ENCODE measurements at regions of chr2 and their contacts with region 1.

Region 1: GRCh38 chr2:162058973-162059668 is 14.9 kb downstream of the DPP4 start:
- DNase-seq: peak; percentile 33
- H3K4me3 Mint-ChIP-seq: peak overlapping the region; percentile 54
- H3K27ac Mint-ChIP-seq: peak overlapping the region; percentile 93
- H3K4me1 Mint-ChIP-seq: peaks cover 82% of the 10 kb centered on the region
- H3K27me3 Mint-ChIP-seq: no peaks in the 10 kb centered on the region

Region 2: DNA sequence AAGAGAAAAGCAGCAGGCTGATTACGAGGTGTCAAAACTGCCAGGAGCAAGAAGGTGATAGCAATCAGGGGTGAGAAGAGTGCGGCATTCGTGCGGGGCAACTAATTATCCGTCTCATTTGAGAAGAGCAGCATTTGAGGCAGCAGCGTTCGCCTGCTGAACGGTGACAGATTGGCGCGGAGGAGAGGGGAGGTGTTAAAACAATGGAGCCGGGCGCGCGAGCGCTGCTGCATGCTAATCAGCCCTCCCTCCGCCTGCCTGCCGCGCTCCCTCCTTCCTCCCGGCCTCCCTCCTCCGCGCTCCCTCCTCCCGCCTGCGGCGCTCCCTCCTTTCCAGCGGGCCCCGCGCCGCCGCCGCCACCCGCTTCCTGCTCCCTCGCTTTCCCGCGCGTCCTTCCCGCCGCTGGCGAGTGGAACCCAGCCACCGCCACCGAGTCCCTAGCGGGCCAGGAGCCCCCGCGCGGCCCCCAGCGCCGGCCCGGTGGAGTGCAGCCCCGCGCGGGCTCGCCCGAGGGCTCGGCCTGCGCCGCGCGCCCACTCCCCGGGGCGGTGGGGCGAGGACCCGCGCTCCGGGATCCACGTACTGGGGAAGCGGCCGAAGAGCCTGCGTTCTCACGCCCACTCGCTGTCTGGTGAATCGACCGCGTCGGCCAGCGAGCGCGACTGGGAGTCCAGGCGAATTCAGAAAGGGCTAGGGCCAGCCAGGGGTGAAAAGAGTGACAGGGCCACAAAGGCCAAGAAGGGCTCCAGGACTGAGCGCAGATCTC is 820.4 kb before region 1 on chr2:
- CTCF ChIA-PET with region 1: no interaction called
- POLR2A ChIA-PET with region 1: no interaction called
- intact Hi-C with region 1: loop called (anchors 10 kb)
- DNase-seq: peak; percentile 71
- H3K4me3 Mint-ChIP-seq: peak overlapping the region; percentile 83
- H3K27ac Mint-ChIP-seq: peak overlapping the region; percentile 65
- H3K4me1 Mint-ChIP-seq: peaks cover 52% of the 10 kb centered on the region
- H3K27me3 Mint-ChIP-seq: no peaks in the 10 kb centered on the region

Region 3: DNA sequence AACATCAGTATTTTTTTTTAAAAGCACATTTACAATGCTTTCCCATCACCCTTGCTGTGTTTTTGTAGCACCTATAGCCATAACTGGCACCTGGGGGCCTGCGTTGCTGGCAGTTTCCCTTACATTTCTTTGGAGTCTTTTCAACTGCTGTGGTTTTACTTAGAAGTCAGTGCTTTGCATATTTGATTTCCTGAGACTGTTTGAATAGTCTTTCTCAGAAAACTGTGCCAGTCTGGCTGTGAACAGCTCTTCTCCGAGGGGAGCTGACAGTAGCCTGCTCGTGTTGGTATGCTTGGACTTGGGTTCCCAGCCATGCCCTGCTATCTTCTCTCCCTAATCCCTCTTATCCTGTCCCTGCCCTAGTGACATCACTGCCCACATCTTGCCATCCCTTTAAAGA is 66.6 kb before region 1 on chr2:
- CTCF ChIA-PET with region 1: no interaction called
- POLR2A ChIA-PET with region 1: no interaction called
- intact Hi-C with region 1: loop called (anchors 1 kb)
- DNase-seq: peak; percentile 77
- H3K4me3 Mint-ChIP-seq: peak overlapping the region; percentile 73
- H3K27ac Mint-ChIP-seq: peak overlapping the region; percentile 92
- H3K4me1 Mint-ChIP-seq: peaks cover 61% of the 10 kb centered on the region
- H3K27me3 Mint-ChIP-seq: no peaks in the 10 kb centered on the region

Region 4: DNA sequence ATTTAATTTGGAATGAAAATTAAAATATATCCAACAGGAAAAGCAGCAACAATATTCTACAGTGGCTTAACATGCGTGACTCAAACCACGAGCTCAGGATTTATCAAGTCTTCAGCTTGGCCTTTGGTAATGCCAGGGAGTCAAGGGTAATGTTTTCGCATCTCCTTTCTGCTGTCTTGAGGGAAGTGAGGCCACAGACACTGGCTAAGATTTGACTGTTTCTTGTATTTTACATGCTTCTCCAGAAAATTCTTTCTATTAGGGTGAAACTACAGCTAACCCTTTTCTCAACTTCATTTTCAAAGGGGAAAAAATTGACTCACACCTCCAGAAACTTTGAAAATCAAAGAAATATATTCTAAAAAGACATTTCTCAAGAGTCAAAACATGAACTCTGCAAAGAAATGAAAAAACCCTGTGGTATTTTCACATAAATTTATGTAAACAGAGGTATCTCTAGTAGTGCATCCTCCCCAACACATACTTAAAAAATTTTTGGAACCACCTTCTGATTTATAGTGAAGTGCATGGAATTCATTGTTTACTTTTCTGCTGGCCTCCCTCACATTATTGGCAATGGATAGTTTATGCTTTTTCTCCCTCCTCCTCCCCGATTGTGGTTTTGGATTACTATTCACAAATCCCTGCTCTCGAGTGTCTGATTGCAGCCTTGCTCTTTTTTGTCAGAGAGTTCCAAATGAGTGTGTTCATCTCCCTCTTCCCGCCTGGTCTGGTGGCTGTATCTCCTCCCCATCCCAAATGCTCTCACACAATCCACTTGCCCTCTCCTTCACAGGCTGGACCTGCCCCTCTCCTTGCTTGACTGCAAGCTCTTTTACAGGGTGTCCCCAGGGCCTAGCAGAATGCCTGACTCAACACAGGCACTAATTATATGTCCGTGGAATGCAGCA is 33.7 kb before region 1 on chr2:
- CTCF ChIA-PET with region 1: no interaction called
- POLR2A ChIA-PET with region 1: no interaction called
- intact Hi-C with region 1: loop called (anchors 1 kb)
- DNase-seq: no peak
- H3K4me3 Mint-ChIP-seq: no peak overlapping the region
- H3K27ac Mint-ChIP-seq: no peak overlapping the region
- H3K4me1 Mint-ChIP-seq: peaks cover 38% of the 10 kb centered on the region
- H3K27me3 Mint-ChIP-seq: no peaks in the 10 kb centered on the region

Region 5: DNA sequence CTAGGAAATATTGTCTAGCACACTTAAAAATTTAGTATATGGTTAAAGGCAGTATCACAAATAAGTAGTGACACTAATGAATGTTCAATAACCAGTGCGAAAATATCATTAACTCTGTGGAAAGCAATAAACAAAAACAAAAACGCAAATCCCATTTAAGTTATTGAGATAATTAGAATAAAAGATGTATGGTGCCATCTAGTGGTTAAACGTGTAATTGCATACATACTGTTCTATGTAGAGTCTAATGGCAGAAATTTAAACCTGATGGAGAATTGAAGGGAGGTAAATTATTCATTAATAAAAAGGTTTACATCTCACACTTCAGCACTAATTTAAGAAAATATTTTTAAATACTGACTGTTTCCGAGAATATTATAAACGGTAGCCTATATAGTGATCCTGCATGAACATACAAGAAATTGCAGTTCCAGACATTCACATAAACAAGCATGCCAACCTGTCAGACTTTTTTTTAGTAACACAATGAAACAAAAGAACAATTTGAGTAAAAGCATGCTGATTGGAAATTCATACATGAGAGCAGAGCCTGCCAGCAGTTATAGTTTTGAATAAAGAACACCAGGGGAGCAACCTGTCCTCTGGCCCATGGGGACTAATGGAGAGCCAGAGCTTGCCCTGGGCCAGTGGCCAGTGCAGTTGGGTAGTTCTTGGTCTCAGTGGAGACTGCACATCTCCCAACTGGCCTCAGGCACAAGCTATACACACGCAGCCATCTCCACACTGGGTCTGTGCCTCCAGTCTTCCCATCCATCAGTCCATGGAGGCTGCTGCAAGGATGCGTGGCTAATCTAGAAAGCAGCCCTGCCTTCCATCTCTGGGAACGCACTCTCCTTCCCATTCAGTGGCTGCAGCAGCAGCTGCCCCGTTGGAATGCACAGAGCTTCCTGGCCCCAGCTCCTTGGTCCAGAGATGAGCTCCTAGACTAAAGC is 65.0 kb after region 1 on chr2:
- CTCF ChIA-PET with region 1: interaction called, 5 read pairs
- POLR2A ChIA-PET with region 1: no interaction called
- intact Hi-C with region 1: loop called (anchors 5 kb)
- DNase-seq: no peak
- H3K4me3 Mint-ChIP-seq: no peak overlapping the region
- H3K27ac Mint-ChIP-seq: no peak overlapping the region
- H3K4me1 Mint-ChIP-seq: peaks cover 8% of the 10 kb centered on the region
- H3K27me3 Mint-ChIP-seq: no peaks in the 10 kb centered on the region